ENCODE measurements at regions of chr14 and their contacts with region 1.

Region 1: GRCh38 chr14:99683619-99684355 is at the start of gene CYP46A1:
- DNase-seq: peak; percentile 97 to 99
- ATAC-seq: peak; percentile 79 to 89
- H3K4me3 ChIP-seq: peak within 1 kb of the TSS; percentile 68
- H3K27ac ChIP-seq: peak within 1 kb of the TSS; percentile 77 to 90
- H3K4me1 ChIP-seq: peaks cover 4% of the 10 kb centered on the region
- CTCF ChIP-seq: no peak
- EP300 ChIP-seq: no peak
- POLR2A ChIP-seq: peak; percentile 41
- RAD21 ChIP-seq: no peak
- polyA plus RNA-seq, gene CYP46A1: 0.06 and 0.09 TPM in 2 replicates

Region 2: GRCh38 chr14:99654235-99654966 is 29.4 kb before region 1 on chr14:
- CTCF ChIA-PET with region 1: interaction called, 10 read pairs
- POLR2A ChIA-PET with region 1: no interaction called
- DNase-seq: peak; percentile 33 to 55
- ATAC-seq: peak; percentile 57 to 85; a peak in 5 of 6 replicates
- H3K4me3 ChIP-seq: no peak overlapping the region
- H3K27ac ChIP-seq: no peak overlapping the region
- H3K4me1 ChIP-seq: peaks cover 2% of the 10 kb centered on the region; the same call in 1 of the 3 replicates
- CTCF ChIP-seq: no peak
- EP300 ChIP-seq: no peak
- POLR2A ChIP-seq: no peak
- RAD21 ChIP-seq: no peak

Region 3: DNA sequence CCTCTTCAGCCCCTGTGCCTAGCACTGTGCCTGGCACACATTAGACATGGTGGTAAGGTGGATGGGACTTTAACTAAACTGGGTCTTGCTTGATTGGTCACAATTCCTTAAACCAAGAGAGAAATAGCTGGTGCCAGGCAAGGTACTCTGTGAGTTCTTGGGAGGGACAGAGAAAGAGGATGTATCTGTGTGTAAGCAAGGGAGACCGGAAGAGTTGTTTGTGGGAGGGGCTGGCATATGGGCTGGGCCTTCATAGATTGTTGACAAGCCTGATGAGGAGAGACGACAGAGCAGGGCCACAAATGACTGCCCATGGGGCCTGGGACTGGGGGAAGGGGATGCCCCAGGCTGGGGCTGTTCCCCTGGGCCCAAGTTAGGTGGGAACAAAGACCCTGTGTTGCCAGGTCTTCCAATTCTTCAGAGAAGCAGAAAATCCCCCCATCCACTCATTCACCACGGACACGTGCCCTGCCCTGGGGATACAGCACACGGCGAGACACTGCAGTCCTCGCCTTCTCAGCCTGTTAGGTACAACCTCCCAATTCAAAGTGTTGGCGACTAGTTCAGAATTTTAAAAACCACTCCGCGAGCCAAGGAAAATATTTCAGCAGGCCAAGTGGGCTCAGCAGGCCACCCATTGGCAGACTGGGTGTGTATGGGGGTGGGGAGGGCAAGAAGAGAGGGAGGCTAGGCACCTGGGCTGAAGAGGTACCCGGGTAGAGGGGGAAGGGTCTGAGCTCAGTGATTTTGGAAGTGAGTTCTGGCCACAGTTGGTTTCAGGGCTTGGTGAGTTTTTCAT is 11.1 kb before region 1 on chr14:
- CTCF ChIA-PET with region 1: interaction called, 42 read pairs
- POLR2A ChIA-PET with region 1: interaction called, 5 read pairs
- DNase-seq: no peak
- ATAC-seq: peak; percentile 6 to 68; a peak in 3 of 6 replicates
- H3K4me3 ChIP-seq: no peak overlapping the region
- H3K27ac ChIP-seq: no peak overlapping the region
- H3K4me1 ChIP-seq: peaks cover 17% of the 10 kb centered on the region; the same call in 2 of the 3 replicates
- CTCF ChIP-seq: no peak
- EP300 ChIP-seq: no peak
- POLR2A ChIP-seq: no peak
- RAD21 ChIP-seq: no peak

Region 4: GRCh38 chr14:99718031-99718810 is 34.4 kb after region 1 on chr14:
- CTCF ChIA-PET with region 1: interaction called, 15 read pairs
- POLR2A ChIA-PET with region 1: interaction called, 5 read pairs
- DNase-seq: no peak
- ATAC-seq: no peak
- H3K4me3 ChIP-seq: no peak overlapping the region
- H3K27ac ChIP-seq: no peak overlapping the region
- H3K4me1 ChIP-seq: no peaks in the 10 kb centered on the region
- CTCF ChIP-seq: no peak
- EP300 ChIP-seq: no peak
- POLR2A ChIP-seq: no peak
- RAD21 ChIP-seq: no peak

Region 5: GRCh38 chr14:99774556-99775307 is 90.9 kb after region 1 on chr14:
- CTCF ChIA-PET with region 1: no interaction called
- POLR2A ChIA-PET with region 1: no interaction called
- DNase-seq: no peak
- ATAC-seq: no peak
- H3K4me3 ChIP-seq: no peak overlapping the region
- H3K27ac ChIP-seq: no peak overlapping the region
- H3K4me1 ChIP-seq: no peaks in the 10 kb centered on the region; the same call in 2 of the 3 replicates
- CTCF ChIP-seq: no peak
- EP300 ChIP-seq: no peak
- POLR2A ChIP-seq: no peak
- RAD21 ChIP-seq: no peak

Region 6: GRCh38 chr14:99884834-99885648 is 201.3 kb after region 1 on chr14:
- CTCF ChIA-PET with region 1: interaction called, 30 read pairs
- POLR2A ChIA-PET with region 1: no interaction called
- DNase-seq: peak; percentile 69 to 71
- ATAC-seq: peak; percentile 75 to 92; a peak in 4 of 6 replicates
- H3K4me3 ChIP-seq: no peak overlapping the region
- H3K27ac ChIP-seq: no peak overlapping the region
- H3K4me1 ChIP-seq: no peaks in the 10 kb centered on the region
- CTCF ChIP-seq: peak; percentile 95
- EP300 ChIP-seq: no peak
- POLR2A ChIP-seq: no peak
- RAD21 ChIP-seq: peak; percentile 91 to 94

Region 7: GRCh38 chr14:99891900-99892299 is 208.1 kb after region 1 on chr14:
- CTCF ChIA-PET with region 1: interaction called, 24 read pairs
- POLR2A ChIA-PET with region 1: no interaction called
- DNase-seq: no peak
- ATAC-seq: no peak
- H3K4me3 ChIP-seq: no peak overlapping the region
- H3K27ac ChIP-seq: no peak overlapping the region
- H3K4me1 ChIP-seq: no peaks in the 10 kb centered on the region
- CTCF ChIP-seq: no peak
- EP300 ChIP-seq: no peak
- POLR2A ChIP-seq: no peak
- RAD21 ChIP-seq: no peak